Activated naive CD4-positive, alpha-beta T cell treated with anti-CD3 and anti-CD28 coated beads for 36 hours (primary cell): ENCODE measurements at regions of chr10 and their contacts with region 1.

Region 1: GRCh38 chr10:43229208-43230061 is 37.4 kb downstream of the RASGEF1A start:
- DNase-seq: peak; percentile 14
- H3K4me3 Mint-ChIP-seq: peak overlapping the region; percentile 59
- H3K27ac Mint-ChIP-seq: no peak overlapping the region
- H3K4me1 Mint-ChIP-seq: peaks cover 9% of the 10 kb centered on the region
- H3K27me3 Mint-ChIP-seq: peaks cover 27% of the 10 kb centered on the region

Region 2: GRCh38 chr10:43461950-43462349 is 232.5 kb after region 1 on chr10:
- CTCF ChIA-PET with region 1: no interaction called
- intact Hi-C with region 1: loop called (anchors 5 kb)
- DNase-seq: peak; percentile 24
- H3K4me3 Mint-ChIP-seq: no peak overlapping the region
- H3K27ac Mint-ChIP-seq: no peak overlapping the region
- H3K4me1 Mint-ChIP-seq: peaks cover 12% of the 10 kb centered on the region
- H3K27me3 Mint-ChIP-seq: no peaks in the 10 kb centered on the region